Esophagus muscularis mucosa (tissue), 4 donors: ENCODE measurements at regions of chr7 and their contacts with region 1.

Region 1: GRCh38 chr7:44240983-44241510 is 40.3 kb downstream of the YKT6 start:
- DNase-seq: no peak
- H3K4me3 ChIP-seq: peak overlapping the region; percentile 16 to 49 (median 31)
- H3K27ac ChIP-seq: no peak overlapping the region
- H3K4me1 ChIP-seq: peaks cover 0 to 8% (median 6%) of the 10 kb centered on the region in 4 donors
- H3K27me3 ChIP-seq: peaks cover 0 to 24% (median 0%) of the 10 kb centered on the region in 4 donors
- CTCF ChIP-seq: peak; percentile 60 to 84 (median 83)
- EP300 ChIP-seq: no peak
- POLR2A ChIP-seq: no peak

Region 2: DNA sequence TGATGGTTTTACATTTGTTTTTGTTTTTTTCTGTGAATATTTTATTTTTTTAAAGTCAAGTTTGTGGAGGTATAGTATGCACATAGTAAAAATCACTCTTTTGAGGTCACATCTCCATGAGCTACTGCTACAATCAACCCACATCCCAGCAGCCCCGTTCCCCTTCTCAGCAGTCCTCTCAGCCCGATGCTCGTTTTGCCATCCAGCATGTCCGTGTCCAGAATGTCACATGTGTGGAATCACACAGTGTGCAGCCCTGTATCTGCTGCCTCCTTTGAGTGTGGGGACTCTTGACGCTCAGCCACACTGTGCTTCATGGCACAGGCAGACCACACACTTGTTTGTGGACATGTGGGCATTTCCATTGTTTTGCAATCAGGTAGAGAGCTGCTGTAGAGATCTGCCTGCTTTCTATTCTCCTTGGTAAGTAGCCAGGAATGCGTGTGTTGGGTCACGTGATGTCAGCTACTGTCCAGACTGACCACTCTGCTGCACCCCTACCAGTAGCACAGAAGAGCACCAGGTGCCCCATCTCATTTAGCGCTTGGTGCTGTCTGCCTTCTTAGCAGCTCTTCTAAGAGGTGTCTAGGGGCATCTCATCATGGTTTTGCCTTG is 156.0 kb after region 1 on chr7:
- intact Hi-C with region 1: no loop called
- DNase-seq: no peak
- H3K4me3 ChIP-seq: no peak overlapping the region
- H3K27ac ChIP-seq: no peak overlapping the region
- H3K4me1 ChIP-seq: peaks cover 0 to 8% (median 7%) of the 10 kb centered on the region in 4 donors
- H3K27me3 ChIP-seq: no peaks in the 10 kb centered on the region
- CTCF ChIP-seq: no peak
- EP300 ChIP-seq: no peak
- POLR2A ChIP-seq: no peak

Region 3: DNA sequence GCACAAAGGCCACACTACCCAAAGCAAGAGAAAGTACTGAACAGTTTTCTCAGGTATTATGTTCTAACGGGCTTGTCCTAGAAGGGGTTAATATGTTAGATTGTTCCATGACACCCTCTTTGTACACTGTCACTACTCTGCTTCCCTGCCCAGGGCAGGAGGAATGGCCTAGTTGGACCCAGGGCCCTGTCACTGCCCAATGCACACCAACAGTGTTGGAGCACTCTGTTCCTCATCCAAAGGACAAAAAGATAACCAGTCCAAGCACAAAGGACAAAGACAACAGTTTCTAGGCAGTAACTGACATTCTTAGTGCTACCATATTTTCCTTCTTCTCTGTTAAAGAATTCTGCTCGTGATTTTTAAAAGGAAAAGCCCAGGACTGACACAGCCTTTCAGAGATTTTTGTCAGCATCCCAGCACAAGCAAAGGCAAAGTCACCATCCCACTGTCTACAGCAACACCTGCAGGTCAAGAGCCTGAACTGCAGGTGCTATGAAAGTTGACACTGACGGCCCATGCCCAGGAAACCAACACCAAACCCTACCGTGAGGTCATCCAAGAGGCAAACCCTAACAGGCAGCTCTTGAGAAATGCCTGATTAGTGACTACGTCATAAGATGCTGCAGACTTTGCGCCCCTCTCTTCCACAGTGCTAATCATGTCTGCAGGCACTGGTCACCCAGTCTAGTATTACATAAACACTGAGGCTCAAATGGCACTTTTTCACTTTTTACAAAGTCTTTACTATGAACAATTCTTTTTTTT is 236.2 kb after region 1 on chr7:
- intact Hi-C with region 1: loop called (anchors 2 kb)
- DNase-seq: no peak
- H3K4me3 ChIP-seq: no peak overlapping the region
- H3K27ac ChIP-seq: no peak overlapping the region
- H3K4me1 ChIP-seq: peaks cover 24 to 34% (median 24%) of the 10 kb centered on the region in 4 donors
- H3K27me3 ChIP-seq: no peaks in the 10 kb centered on the region
- CTCF ChIP-seq: peak; percentile 86 to 96 (median 90)
- EP300 ChIP-seq: no peak
- POLR2A ChIP-seq: no peak

Region 4: DNA sequence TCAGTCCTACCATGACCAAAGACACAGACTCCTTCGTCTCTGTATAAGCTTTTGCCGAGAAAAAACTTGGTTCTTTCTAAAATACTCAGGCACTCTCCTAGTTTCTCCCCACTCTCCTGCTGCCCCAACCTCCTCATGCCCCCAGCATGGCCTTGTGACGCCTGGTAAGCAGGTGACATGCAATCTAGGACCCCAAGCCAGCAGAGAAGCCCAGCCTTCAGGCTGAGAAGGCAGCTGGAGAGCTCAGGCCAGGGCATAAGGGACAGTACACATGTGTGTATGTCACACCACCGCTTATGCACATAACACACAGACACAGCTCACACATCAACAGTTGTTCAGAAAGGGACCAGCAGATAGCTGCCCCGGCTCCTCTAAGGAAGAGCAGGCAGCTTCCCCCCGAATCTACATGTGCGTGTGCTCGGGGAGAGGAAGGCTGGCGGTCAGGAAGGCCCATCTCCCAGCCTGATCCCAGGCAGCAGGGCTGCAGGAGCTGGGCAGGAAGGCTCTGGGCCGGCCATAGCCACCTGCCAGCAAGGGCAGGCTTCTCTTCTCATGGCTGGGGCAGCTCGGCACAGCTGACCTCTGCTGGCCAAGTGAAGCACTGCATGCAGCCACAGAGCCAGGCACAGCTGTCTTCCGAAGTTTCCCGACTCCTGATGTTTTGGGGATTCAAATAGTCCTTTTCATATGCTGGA is 324.2 kb after region 1 on chr7:
- intact Hi-C with region 1: loop called (anchors 5 kb)
- DNase-seq: no peak
- H3K4me3 ChIP-seq: no peak overlapping the region
- H3K27ac ChIP-seq: peak overlapping the region in 2 of 4 donors; percentile 19 to 34
- H3K4me1 ChIP-seq: peaks cover 4 to 17% (median 11%) of the 10 kb centered on the region in 4 donors
- H3K27me3 ChIP-seq: no peaks in the 10 kb centered on the region
- CTCF ChIP-seq: peak in 2 of 3 experiments; percentile 93 to 94
- EP300 ChIP-seq: no peak
- POLR2A ChIP-seq: no peak